Psoas muscle (tissue), 8 donors: ENCODE measurements at regions of chr7 and their contacts with region 1.

Region 1: GRCh38 chr7:16670021-16670420 is 24.0 kb downstream of the BZW2 start:
- DNase-seq: no peak
- ATAC-seq: no peak
- H3K4me3 ChIP-seq: no peak overlapping the region
- H3K27ac ChIP-seq: peak overlapping the region; percentile 70
- H3K4me1 ChIP-seq: peaks cover 37% of the 10 kb centered on the region
- H3K27me3 ChIP-seq: no peaks in the 10 kb centered on the region
- CTCF ChIP-seq: no peak

Region 2: GRCh38 chr7:16627236-16627635 is 42.8 kb before region 1 on chr7:
- intact Hi-C with region 1: loop called in 1 of 2 experiments (anchors 5 kb)
- DNase-seq: no peak
- ATAC-seq: no peak
- H3K4me3 ChIP-seq: no peak overlapping the region
- H3K27ac ChIP-seq: no peak overlapping the region
- H3K4me1 ChIP-seq: no peaks in the 10 kb centered on the region
- H3K27me3 ChIP-seq: no peaks in the 10 kb centered on the region
- CTCF ChIP-seq: no peak

Region 3: DNA sequence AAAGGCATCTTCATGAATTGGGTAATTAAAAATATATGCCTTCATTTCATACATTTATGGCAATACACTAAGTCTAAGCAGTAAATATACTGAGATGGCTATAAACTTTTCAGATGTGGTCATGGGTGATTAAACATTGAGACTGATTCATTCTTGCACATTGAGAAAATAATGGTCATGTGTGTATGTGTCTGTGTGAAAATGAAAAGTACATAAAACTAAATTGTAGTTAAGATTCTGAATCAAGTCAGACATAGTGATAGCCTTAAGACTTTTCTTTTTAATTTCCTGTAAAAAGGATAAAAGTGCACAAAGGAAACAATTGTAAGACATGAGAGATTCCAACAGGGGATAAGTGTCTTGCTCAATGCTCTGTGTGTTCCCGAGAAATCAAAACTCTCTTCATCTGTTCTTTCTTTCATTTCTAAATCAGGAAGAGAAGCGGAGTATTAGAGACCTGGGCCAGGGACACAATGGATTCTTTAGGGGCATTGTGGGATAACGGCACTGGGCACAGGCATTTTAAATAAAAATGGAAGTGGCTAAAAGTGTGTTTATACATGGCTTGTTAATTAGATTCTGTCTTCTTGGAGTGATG is 281.6 kb after region 1 on chr7:
- intact Hi-C with region 1: no loop called
- DNase-seq: no peak
- ATAC-seq: no peak
- H3K4me3 ChIP-seq: no peak overlapping the region
- H3K27ac ChIP-seq: no peak overlapping the region
- H3K4me1 ChIP-seq: peaks cover 5% of the 10 kb centered on the region
- H3K27me3 ChIP-seq: no peaks in the 10 kb centered on the region
- CTCF ChIP-seq: no peak